ENCODE measurements at regions of chr20 and their contacts with region 1.

Region 1: GRCh38 chr20:3218307-3218988 is 9.2 kb downstream of the ITPA start:
- DNase-seq: no peak
- H3K4me3 ChIP-seq: no peak overlapping the region
- H3K27ac ChIP-seq: no peak overlapping the region
- H3K27me3 ChIP-seq: no peaks in the 10 kb centered on the region
- CTCF ChIP-seq: peak; percentile 78

Region 2: DNA sequence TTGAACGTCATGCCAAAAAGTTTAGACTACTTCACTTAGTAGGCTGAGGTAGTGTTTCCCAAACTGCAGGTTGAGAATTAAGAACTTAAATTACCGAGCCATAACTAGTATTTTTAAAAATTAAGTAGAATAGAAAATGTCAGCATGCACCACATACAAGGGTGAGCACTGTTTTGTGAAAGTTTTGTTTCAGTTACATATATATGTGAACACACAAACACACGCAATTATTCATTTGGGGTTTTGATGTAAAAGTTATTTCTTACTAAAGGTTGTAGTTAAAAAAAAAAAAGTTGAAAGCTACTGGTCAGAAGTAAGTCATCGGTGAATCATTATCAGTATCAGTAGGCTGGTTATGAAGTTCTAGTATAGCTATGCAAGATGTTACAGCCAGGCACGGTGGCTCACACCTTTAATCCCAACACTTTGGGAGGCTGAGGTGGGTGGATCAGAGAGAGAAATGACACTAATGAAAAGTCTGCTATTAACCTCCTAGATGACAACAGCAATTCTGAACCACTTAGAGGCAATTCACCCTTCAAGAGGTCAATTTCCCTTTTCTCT is 82.9 kb before region 1 on chr20:
- CTCF ChIA-PET with region 1: no interaction called
- POLR2A ChIA-PET with region 1: no interaction called
- DNase-seq: no peak
- H3K4me3 ChIP-seq: no peak overlapping the region
- H3K27ac ChIP-seq: no peak overlapping the region
- H3K27me3 ChIP-seq: no peaks in the 10 kb centered on the region
- CTCF ChIP-seq: no peak

Region 3: GRCh38 chr20:3203315-3204123 is 14.9 kb before region 1 on chr20:
- CTCF ChIA-PET with region 1: interaction called, 16 read pairs
- POLR2A ChIA-PET with region 1: no interaction called
- DNase-seq: no peak
- H3K4me3 ChIP-seq: peak overlapping the region; percentile 97
- H3K27ac ChIP-seq: no peak overlapping the region
- H3K27me3 ChIP-seq: no peaks in the 10 kb centered on the region
- CTCF ChIP-seq: no peak

Region 4: GRCh38 chr20:3258429-3258828 is 40.0 kb after region 1 on chr20:
- CTCF ChIA-PET with region 1: no interaction called
- POLR2A ChIA-PET with region 1: no interaction called
- DNase-seq: no peak
- H3K4me3 ChIP-seq: no peak overlapping the region
- H3K27ac ChIP-seq: no peak overlapping the region
- H3K27me3 ChIP-seq: no peaks in the 10 kb centered on the region
- CTCF ChIP-seq: no peak

Region 5: DNA sequence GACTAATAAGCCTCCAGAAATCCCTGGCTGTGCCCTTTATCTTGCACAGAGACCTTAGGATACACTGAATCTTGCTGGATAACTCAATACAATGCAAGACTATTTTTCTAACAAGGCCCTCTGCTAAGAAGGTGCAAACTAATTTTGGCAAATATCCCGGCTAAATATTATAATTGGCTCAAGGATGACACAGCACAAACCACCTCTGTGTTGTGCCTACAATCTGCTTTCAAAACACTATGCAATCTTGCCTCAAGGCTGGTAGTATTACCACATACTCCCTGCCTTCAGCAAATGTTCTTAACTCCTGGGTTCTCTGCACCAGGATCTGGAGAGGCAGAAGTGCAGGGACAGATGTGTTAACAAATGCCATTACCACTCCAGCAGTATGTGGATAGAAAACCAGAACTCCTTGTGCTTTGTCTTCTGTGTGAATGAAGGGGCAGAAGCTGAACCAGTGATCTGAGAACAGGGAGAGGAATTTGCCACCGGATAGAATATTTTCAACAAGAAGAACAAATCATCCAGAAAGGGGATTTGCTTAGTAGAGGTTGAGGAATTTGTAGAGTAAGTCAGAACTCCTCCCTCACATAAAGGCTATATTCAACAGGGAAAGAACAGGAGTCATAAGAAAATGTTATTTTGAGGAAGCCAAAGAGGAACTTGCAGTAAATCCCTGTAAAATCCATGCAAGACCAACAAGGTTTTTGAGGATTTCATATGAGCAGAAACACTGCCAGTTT is 94.7 kb after region 1 on chr20:
- CTCF ChIA-PET with region 1: interaction called, 22 read pairs
- POLR2A ChIA-PET with region 1: no interaction called
- DNase-seq: no peak
- H3K4me3 ChIP-seq: no peak overlapping the region
- H3K27ac ChIP-seq: peak overlapping the region; percentile 73
- H3K27me3 ChIP-seq: no peaks in the 10 kb centered on the region
- CTCF ChIP-seq: no peak

Region 6: GRCh38 chr20:3330046-3330741 is 111.7 kb after region 1 on chr20:
- CTCF ChIA-PET with region 1: interaction called, 10 read pairs
- POLR2A ChIA-PET with region 1: no interaction called
- DNase-seq: no peak
- H3K4me3 ChIP-seq: no peak overlapping the region
- H3K27ac ChIP-seq: no peak overlapping the region
- H3K27me3 ChIP-seq: no peaks in the 10 kb centered on the region
- CTCF ChIP-seq: peak; percentile 32; the same call in 1 of the 2 replicates

Region 7: GRCh38 chr20:3651204-3651962 is 432.9 kb after region 1 on chr20:
- CTCF ChIA-PET with region 1: no interaction called
- POLR2A ChIA-PET with region 1: no interaction called
- DNase-seq: no peak
- H3K4me3 ChIP-seq: no peak overlapping the region
- H3K27ac ChIP-seq: no peak overlapping the region
- H3K27me3 ChIP-seq: peaks cover 7% of the 10 kb centered on the region
- CTCF ChIP-seq: no peak